K562 (cell line): ENCODE measurements at regions of chr5 and their contacts with region 1.

Region 1: GRCh38 chr5:35627616-35628015 is 10.0 kb downstream of the SPEF2 start:
- DNase-seq: no peak
- ATAC-seq: no peak
- H3K4me3 ChIP-seq: no peak overlapping the region
- H3K27ac ChIP-seq: no peak overlapping the region
- H3K4me1 ChIP-seq: no peaks in the 10 kb centered on the region
- H3K27me3 ChIP-seq: no peaks in the 10 kb centered on the region
- CTCF ChIP-seq: no peak
- EP300 ChIP-seq: no peak
- POLR2A ChIP-seq: no peak
- RAD21 ChIP-seq: no peak

Region 2: GRCh38 chr5:35608881-35609779 is 18.5 kb before region 1 on chr5:
- CTCF ChIA-PET with region 1: no interaction called
- POLR2A ChIA-PET with region 1: no interaction called
- in situ Hi-C with region 1: no loop called
- intact Hi-C with region 1: loop called (anchors 2 kb)
- DNase-seq: no peak
- ATAC-seq: no peak
- H3K4me3 ChIP-seq: no peak overlapping the region
- H3K27ac ChIP-seq: no peak overlapping the region
- H3K4me1 ChIP-seq: no peaks in the 10 kb centered on the region
- H3K27me3 ChIP-seq: no peaks in the 10 kb centered on the region
- CTCF ChIP-seq: no peak
- EP300 ChIP-seq: no peak
- POLR2A ChIP-seq: no peak
- RAD21 ChIP-seq: no peak